Transverse colon (tissue), 4 donors: ENCODE measurements at regions of chr11 and their contacts with region 1.

Region 1: DNA sequence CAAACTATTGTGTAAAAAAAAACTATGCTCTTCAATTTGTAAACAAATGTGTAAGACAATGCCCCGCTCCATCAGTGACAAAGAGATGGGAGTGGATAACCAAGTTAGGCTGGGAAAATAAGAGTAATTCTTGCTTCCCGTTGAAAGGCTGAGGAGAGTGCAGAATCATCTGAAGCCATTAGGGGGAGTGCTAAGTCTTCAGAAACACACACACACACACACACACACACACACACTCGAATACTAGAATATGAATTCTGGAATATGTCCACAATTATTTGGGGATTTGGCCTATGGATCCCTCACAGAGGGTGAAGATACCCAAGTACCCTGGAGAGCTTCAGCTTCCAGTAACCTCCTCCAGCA is 27.8 kb upstream of the ROBO3 start:
- DNase-seq: no peak
- H3K4me3 ChIP-seq: no peak overlapping the region
- H3K27ac ChIP-seq: peak overlapping the region in 1 of 4 donors; percentile 67
- H3K4me1 ChIP-seq: peaks cover 11 to 39% (median 16%) of the 10 kb centered on the region in 4 donors
- H3K27me3 ChIP-seq: peaks cover 53% of the 10 kb centered on the region
- CTCF ChIP-seq: no peak
- EP300 ChIP-seq: no peak
- POLR2A ChIP-seq: no peak

Region 2: DNA sequence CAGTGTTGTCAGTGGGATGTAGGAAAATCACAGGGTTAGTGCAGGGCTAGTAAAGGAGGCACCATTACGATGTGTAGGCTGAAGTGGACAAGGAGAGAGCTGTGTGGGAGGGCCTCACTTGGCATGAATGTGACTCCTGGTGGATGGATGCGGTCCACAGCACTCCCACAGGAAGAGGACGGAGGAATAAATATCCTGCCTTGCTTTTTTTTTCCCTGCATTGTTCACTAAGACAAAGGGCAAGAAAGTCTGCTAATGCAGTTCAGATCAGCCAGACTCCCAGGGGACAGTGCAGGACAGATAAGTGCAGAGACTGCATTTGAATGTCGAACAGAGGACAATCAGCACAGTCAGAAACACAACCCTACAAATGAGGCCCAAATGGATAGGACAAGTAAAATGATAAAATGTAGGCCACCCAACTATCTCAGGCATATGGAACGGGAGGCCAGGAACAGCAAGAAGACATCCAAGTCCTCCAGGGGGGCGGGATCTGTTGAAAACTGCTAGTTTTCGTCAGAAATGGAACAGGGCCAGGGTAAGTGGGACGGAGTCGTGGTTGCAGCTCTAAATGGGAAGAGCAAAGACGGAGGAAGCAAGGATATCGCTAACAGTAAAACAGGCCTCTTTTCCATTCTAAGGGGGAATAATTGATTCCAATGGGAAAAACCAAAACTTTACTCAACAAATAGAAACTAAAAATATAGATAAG is 366.8 kb before region 1 on chr11:
- in situ Hi-C with region 1: no loop called
- intact Hi-C with region 1: no loop called
- DNase-seq: no peak
- H3K4me3 ChIP-seq: no peak overlapping the region
- H3K27ac ChIP-seq: no peak overlapping the region
- H3K4me1 ChIP-seq: no peaks in the 10 kb centered on the region
- H3K27me3 ChIP-seq: no peaks in the 10 kb centered on the region
- CTCF ChIP-seq: no peak
- EP300 ChIP-seq: no peak
- POLR2A ChIP-seq: no peak

Region 3: DNA sequence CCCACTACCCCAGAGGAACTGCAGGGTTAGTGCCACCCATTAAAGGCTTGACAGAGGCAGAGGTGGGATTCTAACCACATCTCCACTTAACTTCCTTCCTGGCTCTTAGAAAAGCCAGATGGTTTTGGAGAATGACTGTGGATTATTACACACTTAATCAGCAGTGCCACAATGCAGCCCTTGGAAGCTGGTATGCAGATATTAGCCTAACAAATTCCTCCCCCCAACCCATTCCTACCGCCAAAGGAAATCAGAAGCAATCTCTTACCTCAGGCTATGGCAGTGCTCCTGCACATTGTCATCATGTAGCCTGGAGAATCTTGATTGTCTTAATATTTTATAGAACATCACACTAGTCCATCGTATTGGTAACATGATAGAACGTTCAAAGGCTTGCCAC is 120.9 kb before region 1 on chr11:
- in situ Hi-C with region 1: no loop called
- intact Hi-C with region 1: no loop called
- DNase-seq: no peak
- H3K4me3 ChIP-seq: no peak overlapping the region
- H3K27ac ChIP-seq: no peak overlapping the region
- H3K4me1 ChIP-seq: peaks cover 5 to 12% (median 9%) of the 10 kb centered on the region in 4 donors
- H3K27me3 ChIP-seq: peaks cover 44% of the 10 kb centered on the region
- CTCF ChIP-seq: no peak
- EP300 ChIP-seq: no peak
- POLR2A ChIP-seq: no peak

Region 4: GRCh38 chr11:124758317-124759203 is 78.9 kb before region 1 on chr11:
- in situ Hi-C with region 1: loop called in 1 of 4 experiments (anchors 10 kb)
- intact Hi-C with region 1: loop called (anchors 5 kb)
- DNase-seq: peak; percentile 91
- H3K4me3 ChIP-seq: peak overlapping the region in 3 of 4 donors; percentile 3 to 46 (median 22)
- H3K27ac ChIP-seq: peak overlapping the region; percentile 38 to 61 (median 52)
- H3K4me1 ChIP-seq: peaks cover 10 to 47% (median 33%) of the 10 kb centered on the region in 4 donors
- H3K27me3 ChIP-seq: peaks cover 71% of the 10 kb centered on the region
- CTCF ChIP-seq: peak; percentile 72 to 93 (median 83)
- EP300 ChIP-seq: no peak
- POLR2A ChIP-seq: no peak

Region 5: GRCh38 chr11:124812876-124813275 is 24.6 kb before region 1 on chr11:
- in situ Hi-C with region 1: no loop called
- intact Hi-C with region 1: no loop called
- DNase-seq: no peak
- H3K4me3 ChIP-seq: no peak overlapping the region
- H3K27ac ChIP-seq: no peak overlapping the region
- H3K4me1 ChIP-seq: no peaks in the 10 kb centered on the region
- H3K27me3 ChIP-seq: peaks cover 23% of the 10 kb centered on the region
- CTCF ChIP-seq: no peak
- EP300 ChIP-seq: no peak
- POLR2A ChIP-seq: no peak

Region 6: GRCh38 chr11:124953753-124954589 is 116.5 kb after region 1 on chr11 and contains the start of gene CCDC15:
- in situ Hi-C with region 1: no loop called
- intact Hi-C with region 1: no loop called
- DNase-seq: peak; percentile 97
- H3K4me3 ChIP-seq: peak within 1 kb of the TSS; percentile 56 to 86 (median 68)
- H3K27ac ChIP-seq: peak within 1 kb of the TSS; percentile 74 to 86 (median 82)
- H3K4me1 ChIP-seq: peaks cover 0 to 13% (median 2%) of the 10 kb centered on the region in 4 donors
- H3K27me3 ChIP-seq: peaks cover 8% of the 10 kb centered on the region
- CTCF ChIP-seq: no peak
- EP300 ChIP-seq: no peak
- POLR2A ChIP-seq: peak; percentile 85
- total RNA-seq, gene CCDC15: 0.64 to 0.82 (median 0.75) TPM in 3 of 4 donors, not detected in the other